Left lung (tissue), 14 donors: ENCODE measurements at regions of chr6 and their contacts with region 1.

Region 1: GRCh38 chr6:24581084-24581669 is 64.8 kb downstream of the KIAA0319 start:
- DNase-seq: peak in 3 of 4 donors; percentile 46 to 69 (median 62)
- ATAC-seq: peak; percentile 77
- H3K4me3 ChIP-seq: no peak overlapping the region
- H3K27ac ChIP-seq: no peak overlapping the region
- H3K4me1 ChIP-seq: peaks cover 0 to 13% of the 10 kb centered on the region in 2 donors
- H3K27me3 ChIP-seq: no peaks in the 10 kb centered on the region
- CTCF ChIP-seq: peak; percentile 70 to 79

Region 2: GRCh38 chr6:24689964-24690363 is 108.8 kb after region 1 on chr6:
- intact Hi-C with region 1: loop called in 1 of 2 experiments (anchors 5 kb)
- DNase-seq: no peak
- ATAC-seq: no peak
- H3K4me3 ChIP-seq: no peak overlapping the region
- H3K27ac ChIP-seq: no peak overlapping the region
- H3K4me1 ChIP-seq: peaks cover 0 to 6% of the 10 kb centered on the region in 2 donors
- H3K27me3 ChIP-seq: no peaks in the 10 kb centered on the region
- CTCF ChIP-seq: no peak

Region 3: GRCh38 chr6:24766680-24767462 is 185.7 kb after region 1 on chr6:
- intact Hi-C with region 1: loop called in 1 of 2 experiments (anchors 10 kb)
- DNase-seq: no peak
- ATAC-seq: peak; percentile 80
- H3K4me3 ChIP-seq: no peak overlapping the region
- H3K27ac ChIP-seq: no peak overlapping the region
- H3K4me1 ChIP-seq: no peaks in the 10 kb centered on the region
- H3K27me3 ChIP-seq: no peaks in the 10 kb centered on the region
- CTCF ChIP-seq: peak; percentile 22 to 57